H1 (cell line): ENCODE measurements at regions of chr9 and their contacts with region 1.

Region 1: DNA sequence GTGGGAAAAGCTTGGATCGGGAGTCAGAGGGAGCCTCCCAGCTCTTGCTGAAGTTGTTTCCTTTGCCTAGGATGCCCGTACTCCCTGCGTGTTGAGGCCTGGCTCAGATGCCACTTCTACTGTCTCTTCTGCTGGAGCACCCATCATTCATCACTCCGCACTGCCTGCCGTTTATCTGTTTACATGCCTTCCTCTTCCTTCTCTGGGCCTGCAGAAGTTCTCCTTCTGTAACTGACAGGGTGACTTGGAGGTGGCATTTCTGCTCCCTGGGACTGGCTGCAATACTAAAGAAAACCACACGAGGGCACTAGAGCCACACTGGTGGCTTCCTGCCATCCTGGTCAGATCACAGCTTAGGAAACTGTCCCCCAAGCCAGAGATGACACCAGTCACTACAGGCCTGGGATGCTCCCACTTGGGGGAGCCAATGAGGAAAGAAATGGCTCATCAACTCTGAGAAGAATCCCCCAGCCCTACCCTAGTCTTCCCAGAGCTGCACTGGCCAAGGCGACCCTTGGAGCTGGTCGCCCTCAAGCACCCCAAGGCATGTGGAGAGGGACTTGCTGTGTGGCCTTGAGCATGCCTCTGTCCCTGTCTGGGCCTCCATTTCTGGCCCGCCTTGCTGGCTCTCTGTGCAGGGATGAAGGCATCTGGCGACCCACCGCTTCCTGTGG is 9.7 kb upstream of the SLC25A51 start:
- DNase-seq: peak; percentile 82 to 99
- H3K4me3 ChIP-seq: no peak overlapping the region
- H3K27ac ChIP-seq: no peak overlapping the region
- H3K4me1 ChIP-seq: no peaks in the 10 kb centered on the region
- H3K27me3 ChIP-seq: no peaks in the 10 kb centered on the region
- CTCF ChIP-seq: peak; percentile 78 to 99 (median 98)
- EP300 ChIP-seq: no peak
- POLR2A ChIP-seq: no peak
- RAD21 ChIP-seq: peak; percentile 100

Region 2: DNA sequence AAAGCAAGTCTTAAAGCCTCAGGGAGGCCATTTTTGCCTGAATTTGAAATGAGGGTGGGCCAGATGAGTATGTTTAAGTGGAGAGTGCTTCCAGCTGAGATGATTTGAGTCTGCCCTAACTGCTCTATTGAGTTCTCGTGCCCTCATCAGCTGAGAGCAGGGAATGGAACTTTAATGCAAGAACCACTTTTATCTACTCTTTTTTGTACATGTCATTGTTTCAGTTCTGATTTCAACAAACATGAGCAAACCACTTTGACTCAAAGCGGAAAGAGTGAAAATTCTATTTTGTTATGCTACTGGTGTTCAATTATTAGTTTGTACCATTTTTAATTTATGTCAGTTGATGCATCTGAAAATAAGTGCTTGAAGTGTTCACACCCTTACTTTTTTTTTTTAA is 77.2 kb before region 1 on chr9:
- CTCF ChIA-PET with region 1: no interaction called
- POLR2A ChIA-PET with region 1: no interaction called
- DNase-seq: no peak
- H3K4me3 ChIP-seq: no peak overlapping the region
- H3K27ac ChIP-seq: no peak overlapping the region
- H3K4me1 ChIP-seq: no peaks in the 10 kb centered on the region
- H3K27me3 ChIP-seq: no peaks in the 10 kb centered on the region
- CTCF ChIP-seq: no peak
- EP300 ChIP-seq: no peak
- POLR2A ChIP-seq: no peak
- RAD21 ChIP-seq: no peak

Region 3: DNA sequence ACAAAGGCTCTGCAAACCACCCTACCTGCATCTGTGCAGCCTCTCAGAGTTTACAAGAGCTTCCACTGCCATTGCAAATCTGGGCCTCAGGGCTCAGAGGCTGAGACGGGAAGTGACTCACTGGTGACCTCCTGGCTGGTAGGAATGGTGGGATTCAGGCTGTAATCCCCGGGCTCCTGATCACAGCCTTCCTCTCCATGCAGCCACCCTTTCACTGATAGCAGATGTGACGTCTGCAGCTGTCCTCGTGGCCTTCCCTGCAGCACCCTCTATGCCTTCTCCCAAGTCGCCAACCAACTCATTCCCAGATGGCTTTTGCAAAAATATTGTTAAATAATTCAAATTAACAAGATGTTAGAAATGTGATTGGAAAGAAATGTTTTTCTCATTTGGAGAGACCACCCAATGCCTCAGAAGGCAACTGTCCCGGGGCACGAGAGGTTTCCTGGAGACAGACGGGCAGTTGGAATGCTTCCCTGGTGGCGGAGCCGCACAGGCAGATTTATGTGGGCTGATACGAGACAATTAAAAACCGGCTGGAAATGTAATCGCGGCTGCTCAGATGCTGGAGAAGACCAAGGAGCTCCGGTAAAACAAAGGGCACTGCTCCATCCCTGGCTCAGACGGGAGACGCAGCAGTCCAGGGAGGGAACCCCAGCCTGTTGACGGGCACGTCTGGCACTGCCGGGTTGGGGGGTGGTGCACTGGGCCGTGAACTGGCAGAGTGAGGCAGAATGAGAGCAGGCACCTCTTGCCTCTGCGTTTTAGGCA is 24.7 kb after region 1 on chr9:
- CTCF ChIA-PET with region 1: interaction called, 31 read pairs
- POLR2A ChIA-PET with region 1: no interaction called
- DNase-seq: no peak
- H3K4me3 ChIP-seq: no peak overlapping the region
- H3K27ac ChIP-seq: no peak overlapping the region
- H3K4me1 ChIP-seq: peaks cover 0 to 10% (median 2%) of the 10 kb centered on the region in 4 experiments; a peak in 2 of 7 replicates
- H3K27me3 ChIP-seq: no peaks in the 10 kb centered on the region
- CTCF ChIP-seq: no peak
- EP300 ChIP-seq: no peak
- POLR2A ChIP-seq: no peak
- RAD21 ChIP-seq: no peak

Region 4: GRCh38 chr9:37952731-37953130 is 39.1 kb after region 1 on chr9:
- CTCF ChIA-PET with region 1: interaction called, 13 read pairs
- POLR2A ChIA-PET with region 1: no interaction called
- DNase-seq: no peak
- H3K4me3 ChIP-seq: no peak overlapping the region
- H3K27ac ChIP-seq: no peak overlapping the region
- H3K4me1 ChIP-seq: no peaks in the 10 kb centered on the region
- H3K27me3 ChIP-seq: no peaks in the 10 kb centered on the region
- CTCF ChIP-seq: no peak
- EP300 ChIP-seq: no peak
- POLR2A ChIP-seq: no peak
- RAD21 ChIP-seq: no peak

Region 5: DNA sequence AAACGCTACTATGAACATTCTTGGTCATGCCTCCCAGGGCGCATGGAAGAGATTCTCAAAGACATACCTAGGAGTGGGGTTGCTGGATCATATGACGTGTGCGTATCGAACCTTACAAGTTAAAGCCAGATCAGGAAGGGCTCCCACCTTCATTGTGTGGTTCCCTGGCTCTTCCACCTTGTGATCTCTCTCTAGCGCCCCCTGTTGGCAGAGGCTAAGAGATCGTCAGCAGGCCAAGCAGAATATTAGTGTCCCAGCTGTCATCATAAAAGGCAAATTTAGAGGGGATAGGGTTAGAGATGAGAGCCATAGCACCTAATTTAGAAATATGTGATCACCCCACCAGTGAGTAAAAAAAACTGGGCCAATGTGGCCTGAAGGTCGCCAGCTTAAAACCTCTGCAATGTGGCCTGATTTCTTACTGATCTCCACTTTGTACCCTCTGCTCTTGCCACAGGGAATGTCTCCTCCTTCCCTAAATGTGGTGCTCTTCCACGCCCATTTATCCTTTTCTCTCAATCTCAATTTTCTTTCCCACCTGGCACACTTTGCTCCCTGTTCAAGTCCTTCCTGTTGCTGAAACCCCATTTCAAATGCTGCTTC is 247.1 kb after region 1 on chr9:
- CTCF ChIA-PET with region 1: interaction called, 13 read pairs
- POLR2A ChIA-PET with region 1: no interaction called
- DNase-seq: peak in 1 of 2 experiments; percentile 87
- H3K4me3 ChIP-seq: no peak overlapping the region
- H3K27ac ChIP-seq: no peak overlapping the region
- H3K4me1 ChIP-seq: no peaks in the 10 kb centered on the region
- H3K27me3 ChIP-seq: no peaks in the 10 kb centered on the region
- CTCF ChIP-seq: peak; percentile 76 to 91 (median 82)
- EP300 ChIP-seq: no peak
- POLR2A ChIP-seq: no peak
- RAD21 ChIP-seq: peak; percentile 74 to 83